Ovary (tissue), 10 donors: ENCODE measurements at regions of chr3 and their contacts with region 1.

Region 1: GRCh38 chr3:136042608-136043221 is 77.2 kb downstream of the PPP2R3A start:
- DNase-seq: no peak
- H3K4me3 ChIP-seq: no peak overlapping the region
- H3K27ac ChIP-seq: no peak overlapping the region
- H3K4me1 ChIP-seq: no peaks in the 10 kb centered on the region
- H3K27me3 ChIP-seq: no peaks in the 10 kb centered on the region
- CTCF ChIP-seq: peak; percentile 15 to 36 (median 29)
- EP300 ChIP-seq: no peak
- POLR2A ChIP-seq: no peak

Region 2: GRCh38 chr3:135911110-135911509 is 131.6 kb before region 1 on chr3:
- intact Hi-C with region 1: loop called (anchors 2 to 10 kb)
- DNase-seq: no peak
- H3K4me3 ChIP-seq: no peak overlapping the region
- H3K27ac ChIP-seq: no peak overlapping the region
- H3K4me1 ChIP-seq: no peaks in the 10 kb centered on the region
- H3K27me3 ChIP-seq: no peaks in the 10 kb centered on the region
- CTCF ChIP-seq: no peak
- EP300 ChIP-seq: no peak
- POLR2A ChIP-seq: no peak

Region 3: DNA sequence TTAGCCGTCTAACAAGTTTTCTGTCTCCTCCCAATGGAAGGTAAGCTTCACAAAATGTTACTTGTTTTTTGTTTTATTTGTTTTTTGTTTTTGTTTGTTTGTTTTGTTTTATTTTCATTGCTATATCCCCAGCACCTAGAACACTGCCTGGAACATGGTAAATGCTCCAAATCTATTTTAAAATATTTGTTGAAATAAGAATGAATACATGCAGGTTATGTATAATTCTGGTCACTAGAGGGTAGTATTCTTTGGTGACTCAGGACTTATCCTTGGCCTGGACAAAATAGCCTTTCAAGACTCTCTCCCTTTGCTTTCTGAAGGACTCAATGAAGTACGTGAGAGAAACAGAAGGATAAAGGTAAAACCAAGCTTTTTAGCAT is 124.1 kb before region 1 on chr3:
- intact Hi-C with region 1: loop called in 3 of 4 experiments (anchors 5 to 10 kb)
- DNase-seq: no peak
- H3K4me3 ChIP-seq: no peak overlapping the region
- H3K27ac ChIP-seq: no peak overlapping the region
- H3K4me1 ChIP-seq: no peaks in the 10 kb centered on the region
- H3K27me3 ChIP-seq: no peaks in the 10 kb centered on the region
- CTCF ChIP-seq: peak in 1 of 3 donors; percentile 41
- EP300 ChIP-seq: no peak
- POLR2A ChIP-seq: no peak

Region 4: DNA sequence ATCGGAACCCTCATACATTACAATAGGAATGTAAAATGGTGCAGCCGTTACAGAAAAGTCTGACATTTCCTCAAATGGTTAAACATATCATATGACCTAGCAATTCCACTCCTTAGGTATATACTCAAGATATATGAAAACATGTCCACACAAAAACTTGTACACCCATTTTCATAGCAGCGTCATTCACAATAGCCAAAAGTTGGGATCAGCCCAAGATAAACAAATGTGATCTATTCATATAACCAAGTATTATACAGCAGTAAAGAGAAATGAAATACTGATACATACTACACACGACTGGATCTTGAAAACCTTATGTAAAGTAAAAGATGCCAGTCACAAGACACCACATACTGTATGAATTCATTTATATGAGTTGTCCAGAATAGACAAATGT is 51.1 kb after region 1 on chr3:
- intact Hi-C with region 1: no loop called
- DNase-seq: no peak
- H3K4me3 ChIP-seq: no peak overlapping the region
- H3K27ac ChIP-seq: no peak overlapping the region
- H3K4me1 ChIP-seq: no peaks in the 10 kb centered on the region
- H3K27me3 ChIP-seq: no peaks in the 10 kb centered on the region
- CTCF ChIP-seq: no peak
- EP300 ChIP-seq: no peak
- POLR2A ChIP-seq: no peak